Astrocyte of the cerebellum (primary cell): ENCODE measurements at regions of chr3 and their contacts with region 1.

Region 1: DNA sequence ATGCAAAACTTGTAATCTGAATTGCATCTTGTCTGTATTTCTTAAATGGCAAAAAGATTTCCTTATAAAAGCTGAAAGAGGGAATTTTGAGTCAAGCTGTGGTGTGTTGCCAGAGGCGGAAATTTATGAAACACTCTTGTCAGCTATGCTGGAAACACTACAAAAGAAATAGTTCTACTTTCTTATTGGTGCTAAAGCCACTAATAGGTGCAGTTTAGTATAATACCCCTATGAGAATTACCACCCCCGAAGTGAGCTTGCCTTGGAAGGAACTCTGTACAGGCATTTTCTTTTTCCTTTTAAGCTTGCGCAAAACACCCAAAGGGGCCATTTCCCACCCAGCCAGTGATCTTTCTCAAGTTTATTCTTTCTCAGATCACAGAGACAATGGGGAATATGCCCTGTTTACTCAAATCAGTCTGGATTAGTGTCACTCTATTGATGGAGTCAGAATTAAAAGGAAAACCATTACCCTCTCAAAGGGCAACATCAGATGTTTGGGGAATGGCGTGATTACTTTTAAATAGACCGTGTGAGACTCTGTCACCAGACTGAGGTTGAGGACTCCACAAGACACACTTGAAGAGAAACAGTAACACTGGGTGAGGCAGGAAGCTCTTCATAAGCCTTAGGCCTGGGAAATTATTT is 166.0 kb downstream of the TP63 start:
- DNase-seq: no peak
- H3K4me3 ChIP-seq: no peak overlapping the region
- CTCF ChIP-seq: no peak

Region 2: DNA sequence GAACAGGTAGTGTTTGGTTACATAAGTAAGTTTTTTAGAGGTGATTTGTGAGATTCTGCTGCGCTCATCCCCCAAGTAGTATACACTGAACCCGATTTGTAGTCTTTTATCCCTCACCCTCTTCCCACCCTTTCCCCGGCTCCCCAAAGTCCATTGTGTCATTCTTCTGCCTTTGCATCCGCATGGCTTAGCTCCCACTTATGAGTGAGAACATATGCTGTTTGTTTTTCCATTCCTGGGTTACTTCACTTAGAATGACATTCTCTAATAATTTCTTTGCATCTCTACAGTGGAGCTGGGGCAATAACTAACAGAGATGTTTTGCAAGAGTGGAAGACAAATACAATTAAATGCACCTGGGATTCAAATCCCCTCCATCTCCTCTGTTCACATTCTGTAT is 72.9 kb before region 1 on chr3:
- in situ Hi-C with region 1: no loop called
- DNase-seq: no peak
- H3K4me3 ChIP-seq: no peak overlapping the region
- CTCF ChIP-seq: no peak

Region 3: DNA sequence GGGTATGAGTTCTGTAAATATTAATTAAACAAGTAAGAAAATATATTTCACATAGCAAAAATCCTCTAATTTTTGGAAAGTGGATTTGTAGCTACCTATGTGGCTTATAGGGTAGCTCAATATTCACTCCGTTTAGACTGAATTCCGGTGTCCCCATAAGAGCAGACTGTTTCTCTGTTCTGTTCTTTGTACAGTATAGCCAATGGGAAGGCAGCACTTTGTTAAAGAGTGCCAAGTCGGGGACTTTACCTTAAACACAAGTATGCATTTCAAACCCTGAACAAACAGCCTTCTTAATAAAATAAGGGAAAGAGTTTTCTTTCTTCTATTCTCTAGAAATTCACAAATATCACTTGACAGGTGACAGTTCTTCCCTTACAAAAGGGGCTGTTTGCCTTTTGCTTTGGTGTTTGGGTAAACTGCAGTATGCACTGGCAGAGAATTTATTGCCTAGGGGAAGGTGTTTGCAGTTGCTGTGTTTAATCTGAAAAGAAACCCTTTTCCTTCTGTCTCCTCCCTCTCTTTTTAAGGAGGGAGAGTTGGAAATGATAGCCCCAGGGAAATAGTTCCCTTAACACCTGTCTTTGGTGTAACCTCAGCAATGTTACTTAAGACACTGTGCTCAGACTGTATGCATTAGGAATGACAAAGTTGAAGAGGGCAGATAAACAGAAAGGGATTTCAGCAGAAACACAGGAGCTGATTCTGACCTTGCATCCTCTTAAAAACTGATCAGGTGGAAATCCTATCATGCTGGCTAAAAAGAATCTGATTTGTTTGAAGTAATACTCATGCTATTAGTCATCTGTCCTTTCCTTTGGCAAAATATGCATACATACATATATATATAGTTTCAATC is 40.8 kb before region 1 on chr3:
- in situ Hi-C with region 1: loop called (anchors 5 kb)
- DNase-seq: no peak
- H3K4me3 ChIP-seq: no peak overlapping the region
- CTCF ChIP-seq: no peak